AG04450 (cell line): ENCODE measurements at regions of chr11 and their contacts with region 1.

Region 1: DNA sequence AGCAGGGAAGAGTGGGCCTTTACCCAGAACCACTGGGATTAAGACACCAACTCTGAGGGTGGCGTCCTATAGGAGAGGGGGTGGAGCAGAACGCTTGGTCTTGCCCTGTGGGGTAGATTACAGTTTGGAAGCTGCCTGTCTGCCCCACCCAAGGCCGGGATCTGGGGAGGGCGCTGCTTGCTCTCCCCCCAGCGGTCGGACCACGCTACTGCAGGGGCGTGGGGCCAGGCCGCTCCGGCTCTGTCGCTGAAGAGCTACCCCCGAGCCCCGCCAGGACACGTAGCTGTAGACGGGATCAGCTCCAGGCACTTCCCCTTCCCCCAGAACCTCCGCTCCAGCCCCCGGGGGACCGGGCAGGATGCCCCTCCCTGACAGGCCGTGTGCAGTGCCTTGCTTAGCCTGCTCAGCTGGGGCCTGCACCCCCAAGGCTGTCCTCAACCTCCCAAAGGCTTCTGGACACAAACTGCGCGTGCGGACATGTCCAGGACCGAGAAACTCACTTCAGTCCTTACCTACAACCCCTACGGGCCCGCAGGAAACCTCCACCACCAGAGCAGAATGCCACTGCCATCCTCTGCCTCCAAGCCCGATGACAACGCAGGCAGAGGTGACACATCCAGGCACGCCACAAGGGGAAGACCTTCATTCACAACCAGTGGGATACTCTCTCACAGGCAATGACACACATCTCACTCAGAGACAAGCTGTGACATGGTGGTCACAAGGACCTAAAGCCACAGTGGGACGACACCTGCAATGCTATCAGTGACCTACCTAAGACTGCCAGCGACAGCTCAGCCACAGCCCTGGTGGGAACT is 3.6 kb downstream of the AHNAK start:
- DNase-seq: no peak
- H3K4me3 ChIP-seq: peak overlapping the region; percentile 98
- H3K27ac ChIP-seq: peak overlapping the region; percentile 39
- H3K27me3 ChIP-seq: no peaks in the 10 kb centered on the region
- CTCF ChIP-seq: peak; percentile 98

Region 2: GRCh38 chr11:62419314-62419929 is 123.5 kb before region 1 on chr11:
- CTCF ChIA-PET with region 1: interaction called, 137 read pairs
- POLR2A ChIA-PET with region 1: interaction called, 14 read pairs
- DNase-seq: no peak
- H3K4me3 ChIP-seq: no peak overlapping the region
- H3K27ac ChIP-seq: peak overlapping the region; percentile 11
- H3K27me3 ChIP-seq: no peaks in the 10 kb centered on the region
- CTCF ChIP-seq: no peak

Region 3: GRCh38 chr11:62444236-62444833 is 98.6 kb before region 1 on chr11:
- CTCF ChIA-PET with region 1: interaction called, 21 read pairs
- POLR2A ChIA-PET with region 1: interaction called, 3 read pairs
- DNase-seq: peak; percentile 38
- H3K4me3 ChIP-seq: peak overlapping the region; percentile 53
- H3K27ac ChIP-seq: peak overlapping the region; percentile 87
- H3K27me3 ChIP-seq: no peaks in the 10 kb centered on the region
- CTCF ChIP-seq: no peak

Region 4: GRCh38 chr11:62514151-62514550 is 28.8 kb before region 1 on chr11:
- CTCF ChIA-PET with region 1: interaction called, 14 read pairs
- POLR2A ChIA-PET with region 1: no interaction called
- DNase-seq: no peak
- H3K4me3 ChIP-seq: no peak overlapping the region
- H3K27ac ChIP-seq: no peak overlapping the region
- H3K27me3 ChIP-seq: no peaks in the 10 kb centered on the region
- CTCF ChIP-seq: no peak

Region 5: DNA sequence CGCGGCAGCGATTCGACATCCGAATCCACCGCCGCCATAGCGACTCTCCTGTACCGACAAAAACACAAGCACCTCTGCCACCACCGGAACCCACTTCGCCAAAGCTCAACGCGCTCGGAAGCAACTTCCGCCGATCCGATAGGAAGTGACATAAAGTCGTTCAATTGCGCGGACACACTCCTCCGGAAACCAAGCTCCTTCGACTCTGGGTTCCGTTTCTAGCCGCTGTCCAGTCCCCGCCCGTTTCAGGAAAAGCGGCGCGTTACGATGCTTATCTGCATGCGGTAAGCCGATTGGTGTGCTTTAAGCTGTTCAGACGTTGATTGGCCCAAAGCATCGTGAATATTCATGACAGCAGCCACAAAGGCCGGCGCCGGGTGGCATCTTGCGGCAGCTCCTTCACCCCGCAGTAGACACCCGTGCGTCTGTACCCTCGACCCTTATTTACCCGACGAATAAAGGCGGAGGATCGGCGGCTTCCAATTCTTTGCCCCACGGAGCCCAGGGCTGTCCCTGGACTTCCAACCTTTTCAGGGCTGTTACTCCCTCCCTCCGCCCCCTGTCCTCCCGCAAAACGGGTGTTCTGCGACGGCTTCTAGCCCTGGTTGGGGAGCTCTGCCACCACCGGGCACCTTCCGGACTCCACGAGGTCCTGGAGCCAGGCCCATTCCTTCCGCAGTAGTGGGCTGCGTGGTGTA is 48.6 kb after region 1 on chr11 and contains the start of gene TUT1:
- CTCF ChIA-PET with region 1: interaction called, 13 read pairs
- POLR2A ChIA-PET with region 1: interaction called, 12 read pairs
- DNase-seq: peak; percentile 97
- H3K4me3 ChIP-seq: peak within 1 kb of the TSS; percentile 68
- H3K27ac ChIP-seq: peak within 1 kb of the TSS; percentile 87
- H3K27me3 ChIP-seq: no peaks in the 10 kb centered on the region
- CTCF ChIP-seq: no peak
- polyA plus RNA-seq, gene TUT1: 7.8 and 9.0 TPM in 2 replicates

Region 6: DNA sequence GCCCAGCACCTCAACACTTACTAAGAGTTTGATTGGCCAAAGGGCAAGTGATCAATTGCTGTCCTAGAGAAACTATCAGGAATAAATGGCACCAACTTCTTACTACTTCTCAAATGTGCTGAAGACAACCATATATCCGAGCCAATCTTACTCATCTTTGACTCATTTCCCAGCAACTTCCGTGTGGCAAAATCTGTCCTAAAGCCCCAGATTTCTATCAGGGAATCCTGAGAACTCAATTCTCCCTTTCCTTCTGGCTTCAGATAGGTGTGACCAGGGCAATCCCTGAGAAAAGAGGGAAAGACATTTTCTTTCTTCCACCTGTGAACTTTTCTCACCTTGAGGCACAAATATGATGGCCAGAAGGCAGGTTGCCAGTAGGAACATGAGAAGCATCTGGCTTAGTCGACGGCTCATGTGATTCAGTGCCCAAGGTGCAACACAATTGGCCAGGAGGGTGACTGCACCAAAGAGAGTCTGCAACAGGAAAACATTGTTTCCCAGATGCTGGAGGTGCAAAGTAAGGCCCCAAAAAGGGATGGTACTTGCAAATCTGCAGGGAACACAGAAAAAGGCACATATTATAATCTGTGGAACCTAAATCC is 622.8 kb after region 1 on chr11:
- CTCF ChIA-PET with region 1: no interaction called
- POLR2A ChIA-PET with region 1: no interaction called
- DNase-seq: no peak
- H3K4me3 ChIP-seq: no peak overlapping the region
- H3K27ac ChIP-seq: no peak overlapping the region
- H3K27me3 ChIP-seq: no peaks in the 10 kb centered on the region
- CTCF ChIP-seq: no peak